Naive thymus-derived CD4-positive, alpha-beta T cell (primary cell): ENCODE measurements at regions of chr6 and their contacts with region 1.

Region 1: DNA sequence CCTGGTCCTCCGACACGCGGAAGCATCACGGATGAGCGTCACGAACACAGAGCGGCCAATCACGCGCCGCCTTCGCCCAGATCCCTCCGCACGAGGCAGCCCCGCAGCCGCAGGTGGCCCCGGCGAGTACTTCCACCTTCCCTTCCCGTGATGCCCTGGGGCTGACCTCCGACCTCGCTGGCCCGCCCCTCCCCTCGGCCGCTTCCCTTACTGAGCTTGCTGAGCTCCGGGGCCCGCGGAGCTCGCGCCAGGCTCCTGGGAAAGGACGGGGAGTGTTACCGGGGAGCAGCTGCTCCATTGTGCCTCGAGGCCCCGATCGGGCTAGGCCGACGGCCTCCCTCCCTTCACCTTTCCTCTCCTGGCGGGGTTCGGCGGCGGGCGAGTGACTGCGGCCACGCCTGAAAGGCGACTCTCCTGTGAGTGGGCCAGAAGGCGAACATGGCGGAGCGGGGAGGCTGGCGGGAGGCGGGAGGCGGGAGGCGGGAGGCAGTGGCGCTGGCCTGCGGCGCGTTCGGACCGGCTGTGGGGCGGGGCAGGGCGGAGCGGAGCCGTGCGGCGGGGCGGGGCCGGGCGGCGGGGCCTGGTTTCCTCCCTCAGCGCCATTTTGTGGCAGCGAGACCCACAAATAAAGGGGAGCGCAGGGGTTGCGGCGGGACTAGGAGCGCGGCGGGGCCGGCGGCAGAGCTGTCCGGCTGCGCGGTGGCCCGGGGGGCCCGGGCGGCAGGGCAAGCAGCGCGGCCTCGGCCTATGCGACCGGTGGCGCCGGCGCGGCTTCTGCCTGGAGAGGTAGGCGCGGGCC is at the start of gene WTAP:
- DNase-seq: peak; percentile 83 to 97 (median 97)
- ATAC-seq: peak; percentile 93
- H3K4me3 ChIP-seq: peak within 1 kb of the TSS; percentile 89
- H3K4me3 Mint-ChIP-seq: peak within 1 kb of the TSS; percentile 87 to 97 (median 95)
- H3K27ac ChIP-seq: peak within 1 kb of the TSS; percentile 91
- H3K27ac Mint-ChIP-seq: peak within 1 kb of the TSS; percentile 95 to 100 (median 99)
- H3K4me1 ChIP-seq: peaks cover 33 to 34% of the 10 kb centered on the region in 2 donors
- H3K4me1 Mint-ChIP-seq: peaks cover 34 to 79% (median 67%) of the 10 kb centered on the region in 7 donors
- H3K27me3 ChIP-seq: no peaks in the 10 kb centered on the region
- H3K27me3 Mint-ChIP-seq: peaks cover 0 to 6% (median 0%) of the 10 kb centered on the region in 5 donors
- total RNA-seq, gene WTAP: 117 to 152 (median 141) TPM

Region 2: GRCh38 chr6:159739341-159739740 is 12.2 kb after region 1 on chr6:
- CTCF ChIA-PET with region 1: no interaction called
- POLR2A ChIA-PET with region 1: interaction called, 13 read pairs
- intact Hi-C with region 1: loop called (anchors 1 to 2 kb)
- DNase-seq: no peak
- ATAC-seq: no peak
- H3K4me3 ChIP-seq: no peak overlapping the region
- H3K4me3 Mint-ChIP-seq: no peak overlapping the region
- H3K27ac ChIP-seq: no peak overlapping the region
- H3K27ac Mint-ChIP-seq: peak overlapping the region in 4 of 9 donors; percentile 38 to 82 (median 60)
- H3K4me1 ChIP-seq: peaks cover 10 to 15% of the 10 kb centered on the region in 2 donors
- H3K4me1 Mint-ChIP-seq: peaks cover 11 to 56% (median 49%) of the 10 kb centered on the region in 7 donors
- H3K27me3 ChIP-seq: no peaks in the 10 kb centered on the region
- H3K27me3 Mint-ChIP-seq: no peaks in the 10 kb centered on the region

Region 3: GRCh38 chr6:159745081-159745480 is 18.0 kb after region 1 on chr6:
- CTCF ChIA-PET with region 1: no interaction called
- POLR2A ChIA-PET with region 1: interaction called, 4 read pairs
- intact Hi-C with region 1: loop called (anchors 1 to 2 kb)
- DNase-seq: no peak
- ATAC-seq: no peak
- H3K4me3 ChIP-seq: no peak overlapping the region
- H3K4me3 Mint-ChIP-seq: no peak overlapping the region
- H3K27ac ChIP-seq: peak overlapping the region; percentile 16
- H3K27ac Mint-ChIP-seq: peak overlapping the region; percentile 4 to 83 (median 70)
- H3K4me1 ChIP-seq: no peaks in the 10 kb centered on the region
- H3K4me1 Mint-ChIP-seq: peaks cover 2 to 40% (median 30%) of the 10 kb centered on the region in 7 donors
- H3K27me3 ChIP-seq: no peaks in the 10 kb centered on the region
- H3K27me3 Mint-ChIP-seq: no peaks in the 10 kb centered on the region

Region 4: DNA sequence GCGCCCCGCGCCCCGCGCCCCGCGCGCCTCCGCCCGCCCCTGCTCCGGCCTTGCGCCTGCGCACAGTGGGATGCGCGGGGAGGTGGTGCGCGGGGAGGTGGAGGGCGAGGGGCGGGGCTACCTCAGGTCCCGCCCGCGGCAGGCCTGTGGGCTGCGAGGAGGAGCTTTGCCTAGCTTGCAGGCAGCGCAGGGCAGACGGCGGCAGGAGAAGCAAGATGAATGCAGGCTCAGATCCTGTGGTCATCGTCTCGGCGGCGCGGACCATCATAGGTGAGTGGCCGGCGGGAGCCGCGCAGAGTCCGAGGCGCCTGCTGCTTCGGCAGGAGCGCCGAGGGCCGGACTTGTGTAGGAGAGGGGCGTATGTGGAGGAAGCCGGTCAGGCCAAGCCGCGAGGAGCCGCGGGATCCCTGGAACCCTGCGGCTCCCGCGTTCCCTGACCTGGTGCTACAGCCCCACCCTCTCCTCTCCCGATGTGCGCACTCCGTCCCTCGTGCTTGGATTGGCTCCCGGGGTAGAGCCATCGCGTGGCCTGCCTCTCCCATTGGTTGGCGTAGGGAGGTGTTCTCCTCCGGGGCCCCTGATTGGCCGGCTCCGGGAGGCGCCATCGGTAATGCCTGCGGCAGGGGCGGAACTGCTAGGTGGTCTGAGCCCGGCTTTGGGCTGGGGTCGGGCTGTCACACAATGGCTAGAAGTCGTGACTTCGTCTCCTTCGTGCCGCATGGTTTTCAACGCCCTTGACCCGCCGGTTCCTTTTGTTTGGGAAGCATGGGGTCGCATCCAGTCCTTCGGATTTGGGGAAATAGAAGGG is 35.0 kb after region 1 on chr6 and contains the start of gene ACAT2:
- CTCF ChIA-PET with region 1: interaction called, 7 read pairs
- POLR2A ChIA-PET with region 1: interaction called, 63 read pairs
- intact Hi-C with region 1: loop called (anchors 1 kb)
- DNase-seq: peak; percentile 89 to 95 (median 93)
- ATAC-seq: peak; percentile 94
- H3K4me3 ChIP-seq: peak within 1 kb of the TSS; percentile 99
- H3K4me3 Mint-ChIP-seq: peak within 1 kb of the TSS; percentile 84 to 97 (median 94)
- H3K27ac ChIP-seq: peak within 1 kb of the TSS; percentile 98
- H3K27ac Mint-ChIP-seq: peak within 1 kb of the TSS; percentile 93 to 99 (median 97)
- H3K4me1 ChIP-seq: peaks cover 6 to 15% of the 10 kb centered on the region in 2 donors
- H3K4me1 Mint-ChIP-seq: peaks cover 23 to 49% (median 34%) of the 10 kb centered on the region in 7 donors
- H3K27me3 ChIP-seq: no peaks in the 10 kb centered on the region
- H3K27me3 Mint-ChIP-seq: no peaks in the 10 kb centered on the region
- total RNA-seq, gene ACAT2: 18.5 to 53.9 (median 28.0) TPM

Region 5: DNA sequence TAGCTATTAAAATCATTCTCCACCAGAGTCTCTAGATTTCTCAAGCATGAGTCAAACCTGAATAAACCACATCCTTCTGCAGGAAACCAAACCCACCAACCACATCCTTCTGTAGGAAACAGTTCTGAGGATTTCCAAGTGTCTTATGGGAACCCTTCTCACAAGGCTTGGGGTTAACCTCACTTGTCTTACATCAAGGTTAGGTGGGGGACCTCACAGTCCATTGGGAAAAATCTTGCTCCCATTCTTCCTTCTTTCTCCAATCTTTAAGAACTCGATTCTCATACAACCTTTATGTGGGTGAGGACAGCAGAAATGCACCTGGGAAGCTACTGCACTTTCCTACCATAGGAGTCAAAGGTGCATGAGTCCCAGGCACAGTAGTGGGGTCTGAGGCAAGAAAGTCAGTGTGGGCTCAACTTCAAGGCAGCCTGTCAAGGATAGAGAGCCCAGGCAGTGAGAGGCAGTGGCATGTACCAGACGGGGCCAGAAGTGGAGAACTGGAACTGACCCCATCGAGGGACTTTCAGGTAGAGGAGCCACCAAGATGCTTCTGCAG is 735.5 kb after region 1 on chr6:
- CTCF ChIA-PET with region 1: no interaction called
- POLR2A ChIA-PET with region 1: interaction called, 5 read pairs
- intact Hi-C with region 1: loop called in 1 of 2 experiments (anchors 2 kb)
- DNase-seq: peak in 8 of 9 donors; percentile 69 to 93 (median 90)
- ATAC-seq: peak; percentile 95
- H3K4me3 ChIP-seq: peak overlapping the region; percentile 47
- H3K4me3 Mint-ChIP-seq: peak overlapping the region; percentile 60 to 89 (median 72)
- H3K27ac ChIP-seq: no peak overlapping the region
- H3K27ac Mint-ChIP-seq: peak overlapping the region; percentile 53 to 98 (median 88)
- H3K4me1 ChIP-seq: peaks cover 50 to 56% of the 10 kb centered on the region in 2 donors
- H3K4me1 Mint-ChIP-seq: peaks cover 33 to 81% (median 71%) of the 10 kb centered on the region in 7 donors
- H3K27me3 ChIP-seq: no peaks in the 10 kb centered on the region
- H3K27me3 Mint-ChIP-seq: peaks cover 0 to 52% (median 10%) of the 10 kb centered on the region in 5 donors

Region 6: GRCh38 chr6:161273752-161274487 is 1546.8 kb after region 1 on chr6 and contains the start of gene AGPAT4:
- CTCF ChIA-PET with region 1: no interaction called
- POLR2A ChIA-PET with region 1: no interaction called
- intact Hi-C with region 1: loop called in 1 of 2 experiments (anchors 5 kb)
- DNase-seq: peak; percentile 31 to 85 (median 78)
- ATAC-seq: peak; percentile 96
- H3K4me3 ChIP-seq: peak within 1 kb of the TSS; percentile 46
- H3K4me3 Mint-ChIP-seq: peak within 1 kb of the TSS; percentile 82 to 98 (median 94)
- H3K27ac ChIP-seq: peak within 1 kb of the TSS; percentile 66
- H3K27ac Mint-ChIP-seq: peak within 1 kb of the TSS; percentile 87 to 98 (median 94)
- H3K4me1 ChIP-seq: peaks cover 0 to 6% of the 10 kb centered on the region in 2 donors
- H3K4me1 Mint-ChIP-seq: peaks cover 10 to 31% (median 19%) of the 10 kb centered on the region in 7 donors
- H3K27me3 ChIP-seq: no peaks in the 10 kb centered on the region
- H3K27me3 Mint-ChIP-seq: peaks cover 0 to 15% (median 0%) of the 10 kb centered on the region in 5 donors
- total RNA-seq, gene AGPAT4: 2.0 to 16.2 (median 4.4) TPM